ENCODE measurements at regions of chr11 and their contacts with region 1.

Region 1: GRCh38 chr11:46380340-46381047 is 975 bp upstream of the MDK start:
- DNase-seq: peak in 1 of 2 experiments; percentile 92
- H3K4me3 ChIP-seq: peak overlapping the region; percentile 63 to 95 (median 69)
- H3K27ac ChIP-seq: peak overlapping the region; percentile 53
- H3K4me1 ChIP-seq: peaks cover 0 to 16% (median 13%) of the 10 kb centered on the region in 4 experiments; a peak in 6 of 7 replicates
- H3K27me3 ChIP-seq: no peaks in the 10 kb centered on the region
- CTCF ChIP-seq: no peak
- EP300 ChIP-seq: peak in 1 of 2 experiments; percentile 25; a peak in 1 of 3 replicates
- POLR2A ChIP-seq: peak in 1 of 2 experiments; percentile 56; a peak in 2 of 3 replicates
- RAD21 ChIP-seq: no peak

Region 2: GRCh38 chr11:46352063-46352841 is 28.2 kb before region 1 on chr11:
- CTCF ChIA-PET with region 1: interaction called, 1,004 read pairs
- POLR2A ChIA-PET with region 1: interaction called, 10 read pairs
- DNase-seq: peak in 1 of 2 experiments; percentile 92
- H3K4me3 ChIP-seq: no peak overlapping the region
- H3K27ac ChIP-seq: peak overlapping the region; percentile 29; the same call in 1 of the 2 replicates
- H3K4me1 ChIP-seq: peaks cover 7 to 38% (median 29%) of the 10 kb centered on the region in 4 experiments
- H3K27me3 ChIP-seq: no peaks in the 10 kb centered on the region
- CTCF ChIP-seq: peak; percentile 93 to 98 (median 96)
- EP300 ChIP-seq: no peak; a peak in 1 of 3 replicates
- POLR2A ChIP-seq: no peak
- RAD21 ChIP-seq: peak; percentile 69 to 77

Region 3: DNA sequence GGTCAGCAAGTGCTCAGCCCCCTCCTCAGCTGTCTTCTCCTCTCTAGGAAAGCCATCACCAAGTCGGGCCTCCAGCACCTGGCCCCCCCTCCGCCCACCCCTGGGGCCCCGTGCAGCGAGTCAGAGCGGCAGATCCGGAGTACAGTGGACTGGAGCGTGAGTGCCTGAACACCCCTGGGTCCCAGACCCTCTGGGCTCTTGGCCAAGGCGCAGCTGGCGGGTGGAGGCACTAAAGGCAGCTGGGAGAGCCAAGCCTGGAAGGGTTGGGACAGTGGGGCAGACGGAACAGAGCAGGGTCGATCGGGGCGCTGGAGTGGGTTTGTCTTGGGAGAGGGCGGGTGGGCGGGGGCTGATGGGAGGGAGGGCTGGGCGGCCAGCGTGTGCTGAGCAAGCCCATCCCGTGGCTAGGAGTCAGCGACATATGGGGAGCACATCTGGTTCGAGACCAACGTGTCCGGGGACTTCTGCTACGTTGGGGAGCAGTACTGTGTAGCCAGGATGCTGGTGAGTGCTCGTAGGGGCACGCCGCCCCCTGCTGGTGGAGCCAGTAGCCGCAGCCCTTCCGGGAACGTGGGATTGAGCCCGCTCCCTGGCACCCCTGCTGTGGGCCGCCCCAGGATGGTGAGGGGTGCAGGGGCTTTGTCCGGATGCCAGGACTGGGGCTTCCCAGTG is 13.1 kb before region 1 on chr11:
- CTCF ChIA-PET with region 1: interaction called, 1,004 read pairs
- POLR2A ChIA-PET with region 1: interaction called, 11 read pairs
- DNase-seq: peak in 1 of 2 experiments; percentile 95
- H3K4me3 ChIP-seq: no peak overlapping the region
- H3K27ac ChIP-seq: no peak overlapping the region; the same call in 1 of the 2 replicates
- H3K4me1 ChIP-seq: peaks cover 0 to 17% (median 8%) of the 10 kb centered on the region in 4 experiments; a peak in 5 of 7 replicates
- H3K27me3 ChIP-seq: no peaks in the 10 kb centered on the region
- CTCF ChIP-seq: peak in 2 of 3 experiments; percentile 75 to 90; a peak in 3 of 4 replicates
- EP300 ChIP-seq: no peak
- POLR2A ChIP-seq: no peak
- RAD21 ChIP-seq: peak; percentile 64 to 72

Region 4: DNA sequence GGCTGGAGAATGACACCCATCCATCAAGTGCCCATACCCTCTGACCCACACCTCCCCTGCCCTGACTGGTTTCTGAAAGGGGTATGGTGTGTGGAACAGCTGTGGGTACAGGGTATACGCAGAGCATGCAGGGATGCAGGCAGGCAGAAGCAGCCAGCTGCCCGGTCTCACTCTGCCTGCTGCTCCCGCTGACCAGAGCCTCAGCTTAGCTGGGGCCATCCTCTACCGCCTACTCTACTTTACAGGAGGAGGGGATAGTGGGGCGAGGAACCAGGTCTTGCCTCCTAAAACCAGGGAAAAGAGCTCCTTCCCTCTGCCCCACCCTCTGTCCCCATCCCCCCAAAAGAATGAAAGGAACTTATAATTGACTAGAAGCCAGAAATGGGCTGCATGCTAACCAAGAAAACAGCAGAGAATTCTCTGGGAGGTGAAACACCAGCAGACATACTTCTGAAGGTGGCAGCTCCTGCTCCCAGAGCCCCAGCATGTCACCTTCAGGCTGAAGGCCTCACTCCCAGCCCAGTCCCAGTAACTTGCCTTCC is 24.1 kb after region 1 on chr11:
- CTCF ChIA-PET with region 1: interaction called, 13 read pairs
- POLR2A ChIA-PET with region 1: interaction called, 3 read pairs
- DNase-seq: no peak
- H3K4me3 ChIP-seq: no peak overlapping the region
- H3K27ac ChIP-seq: no peak overlapping the region
- H3K4me1 ChIP-seq: no peaks in the 10 kb centered on the region
- H3K27me3 ChIP-seq: no peaks in the 10 kb centered on the region
- CTCF ChIP-seq: no peak
- EP300 ChIP-seq: no peak
- POLR2A ChIP-seq: no peak
- RAD21 ChIP-seq: no peak